ENCODE measurements at regions of chr16 and their contacts with region 1.

Region 1: DNA sequence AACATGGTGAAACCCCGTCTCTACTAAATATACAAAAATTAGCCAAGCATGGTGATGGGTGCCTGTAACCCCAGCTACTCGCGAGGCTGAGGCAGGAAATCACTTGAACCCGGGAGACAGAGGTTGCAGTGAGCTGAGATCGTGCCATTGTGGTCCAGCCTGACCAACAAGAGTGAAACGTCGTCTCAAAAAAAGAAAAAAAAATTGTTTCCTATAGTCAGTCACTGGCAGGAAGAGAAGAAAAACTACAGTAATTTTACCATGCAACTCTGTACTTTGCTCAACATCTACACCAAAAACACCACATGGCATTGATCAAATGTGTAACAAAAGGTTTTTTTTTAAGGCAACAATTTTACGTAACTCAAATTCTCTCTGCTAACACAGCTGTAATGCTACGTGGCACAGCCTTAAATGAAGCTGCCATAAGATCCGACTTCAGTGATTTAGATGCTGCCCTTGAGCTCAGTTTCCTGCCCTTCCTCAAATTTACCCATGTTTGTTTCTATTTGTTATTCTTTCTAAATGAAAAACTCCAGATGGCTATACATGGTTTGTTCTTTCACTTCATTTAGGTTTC is 40.2 kb downstream of the CNOT1 start:
- DNase-seq: no peak
- H3K4me3 ChIP-seq: no peak overlapping the region
- CTCF ChIP-seq: no peak

Region 2: DNA sequence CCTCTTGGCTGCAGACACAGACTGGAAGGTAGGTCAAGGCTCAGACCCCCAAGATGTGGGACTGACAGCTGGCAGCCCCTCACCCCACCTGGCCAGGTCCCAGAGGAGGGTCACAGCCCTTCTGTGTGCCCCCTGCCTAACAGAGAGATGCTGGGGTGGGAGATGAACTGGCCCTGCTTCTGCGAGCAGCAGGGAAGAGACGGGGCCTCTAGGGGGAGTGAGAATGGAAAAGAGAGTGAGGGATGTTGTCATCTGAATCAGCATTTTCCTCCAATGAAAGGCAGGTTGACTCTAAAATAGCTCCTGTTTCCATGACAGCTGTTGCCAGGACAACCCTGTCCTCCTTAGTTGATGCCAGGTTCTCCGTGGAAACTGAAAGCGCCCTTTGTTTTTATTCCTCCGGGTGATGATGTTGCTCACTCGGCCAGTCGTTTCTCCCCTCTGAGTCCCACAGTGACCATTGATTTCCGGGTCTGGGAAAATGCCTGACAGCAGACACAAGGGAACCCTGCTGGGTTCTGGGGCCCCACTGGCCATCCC is 94.4 kb before region 1 on chr16:
- in situ Hi-C with region 1: no loop called
- DNase-seq: peak; percentile 98
- H3K4me3 ChIP-seq: peak overlapping the region; percentile 1
- CTCF ChIP-seq: peak; percentile 82

Region 3: GRCh38 chr16:58537124-58537906 is 52.1 kb before region 1 on chr16:
- in situ Hi-C with region 1: loop called (anchors 5 kb)
- DNase-seq: no peak
- H3K4me3 ChIP-seq: no peak overlapping the region
- CTCF ChIP-seq: no peak

Region 4: DNA sequence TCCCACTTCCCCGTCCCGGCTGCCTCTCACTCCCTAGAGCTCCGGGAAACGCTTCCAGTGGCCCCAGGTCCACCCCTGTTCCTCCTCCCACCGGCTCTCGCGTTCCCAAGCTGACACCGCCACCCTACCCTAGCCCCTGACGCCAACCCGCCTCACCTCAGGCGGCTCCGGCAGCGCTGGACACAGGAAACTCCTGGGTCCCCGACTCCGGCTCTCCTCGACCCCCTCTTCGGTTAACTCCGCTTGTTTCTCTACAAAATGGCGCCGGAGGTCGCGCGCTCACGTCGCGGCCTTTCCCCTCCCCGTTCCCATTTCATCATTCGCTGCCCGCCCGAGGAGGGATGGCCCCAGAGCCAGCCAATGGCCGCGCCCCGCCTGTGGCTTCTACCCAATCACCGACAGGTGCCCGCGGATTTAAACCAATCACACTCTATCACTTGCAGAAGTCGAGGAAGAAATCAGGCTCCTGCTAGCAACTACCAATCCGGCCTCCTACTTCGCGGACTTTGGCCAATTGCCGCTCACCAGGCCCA is 40.2 kb after region 1 on chr16 and contains the start of gene CNOT1:
- in situ Hi-C with region 1: loop called (anchors 5 kb)
- DNase-seq: peak; percentile 99
- H3K4me3 ChIP-seq: peak within 1 kb of the TSS; percentile 99
- CTCF ChIP-seq: no peak